CD8-positive, alpha-beta T cell (primary cell): ENCODE measurements at regions of chr7 and their contacts with region 1.

Region 1: DNA sequence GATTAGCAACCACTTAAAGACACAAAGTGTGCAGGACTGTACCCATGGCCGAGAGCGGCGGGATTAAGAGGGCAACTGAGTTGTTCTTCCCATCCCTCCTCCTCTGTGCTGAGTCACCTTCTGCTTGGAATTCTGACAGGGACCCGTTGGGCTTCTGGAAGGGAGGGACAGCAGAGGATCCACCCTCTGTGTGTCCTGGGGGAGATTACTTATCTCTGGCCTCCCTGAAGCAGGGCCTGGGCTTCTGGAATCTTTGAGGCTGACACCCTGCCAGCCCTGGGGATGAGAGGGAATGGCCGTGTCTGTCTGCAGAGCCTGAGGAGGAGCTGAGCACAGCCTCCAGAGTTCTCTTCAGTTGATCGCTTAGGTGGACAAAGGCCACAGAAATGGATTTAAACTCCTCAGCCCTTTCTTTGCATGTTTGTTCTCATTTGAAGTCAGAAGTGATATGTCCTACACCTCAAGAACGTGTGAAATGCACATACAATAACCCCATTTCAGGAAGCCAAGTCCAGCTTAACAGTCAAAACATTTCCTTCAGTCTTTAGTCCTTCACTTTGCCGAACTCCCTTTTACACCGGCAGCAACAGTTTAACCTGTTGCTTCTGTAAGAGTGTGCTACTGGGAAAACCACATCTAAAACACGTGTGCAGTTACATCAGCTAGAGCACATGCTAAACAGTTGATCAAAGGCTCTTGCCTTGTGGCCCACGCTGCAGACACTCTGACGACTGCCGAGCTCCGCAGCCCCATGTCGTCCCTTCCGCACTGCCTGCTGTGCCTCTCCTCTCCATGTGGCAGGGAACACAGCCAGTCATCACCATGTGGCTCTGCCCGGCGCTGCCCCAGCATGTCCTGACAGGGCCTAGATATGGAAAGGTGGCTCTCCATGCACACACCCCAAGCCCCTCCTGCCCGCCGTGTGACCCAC is 55.7 kb downstream of the IKZF1 start:
- DNase-seq: peak; percentile 62 to 96 (median 82)
- ATAC-seq: peak; percentile 83
- H3K4me3 ChIP-seq: peak overlapping the region in 1 of 2 experiments; percentile 17
- H3K4me3 Mint-ChIP-seq: peak overlapping the region; percentile 76
- H3K27ac ChIP-seq: peak overlapping the region; percentile 78 to 91
- H3K27ac Mint-ChIP-seq: peak overlapping the region; percentile 99
- H3K4me1 ChIP-seq: peaks cover 97% of the 10 kb centered on the region
- H3K4me1 Mint-ChIP-seq: peaks cover 98% of the 10 kb centered on the region
- H3K27me3 ChIP-seq: no peaks in the 10 kb centered on the region
- H3K27me3 Mint-ChIP-seq: no peaks in the 10 kb centered on the region
- CTCF ChIP-seq: no peak

Region 2: DNA sequence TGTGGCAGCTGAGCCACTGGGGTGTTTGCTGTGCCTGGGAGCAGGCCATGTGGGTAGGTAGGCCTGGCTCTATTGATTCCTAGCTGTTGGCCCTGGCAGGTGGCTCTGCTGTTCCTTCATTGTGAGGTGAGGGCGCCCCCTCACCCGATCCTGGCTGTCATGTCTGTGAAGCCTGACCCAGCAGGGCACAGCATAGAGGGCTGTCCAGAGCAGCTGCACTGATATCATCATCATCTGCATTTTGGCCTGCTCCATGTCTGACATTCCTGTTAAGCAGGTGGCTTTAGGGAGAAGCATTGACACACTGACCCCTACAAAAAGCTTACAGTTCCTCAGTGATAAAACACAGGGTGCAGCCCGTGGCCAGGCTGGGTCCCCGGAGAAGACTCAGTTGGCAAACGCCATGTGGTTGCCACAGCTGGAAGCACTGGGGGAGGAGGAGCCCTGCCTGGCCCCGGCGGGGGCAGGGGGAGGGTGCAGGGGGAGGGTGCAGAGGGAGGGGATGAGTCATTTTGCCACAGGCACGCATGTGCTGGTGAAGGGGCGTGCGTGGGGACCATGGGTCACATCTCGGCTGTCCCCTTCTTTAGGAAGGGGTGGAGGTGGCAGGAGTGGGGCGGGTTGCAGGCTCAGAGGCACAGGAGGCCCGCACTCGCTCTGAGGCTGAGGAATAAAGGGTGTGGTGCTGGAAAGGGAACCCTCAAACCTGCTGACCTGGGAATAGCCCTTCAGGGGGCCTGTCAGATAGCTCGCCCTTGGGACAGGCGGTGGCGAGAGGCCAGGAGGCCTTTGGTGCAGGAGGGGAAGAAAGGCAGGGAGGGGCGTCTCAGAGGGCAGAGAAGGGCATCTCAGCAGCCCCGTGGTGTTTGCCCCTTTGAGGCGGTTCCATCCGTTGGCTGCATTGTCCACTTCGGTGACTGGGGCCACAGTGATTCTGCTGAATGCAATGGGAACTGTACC is 24.2 kb before region 1 on chr7:
- CTCF ChIA-PET with region 1: interaction called, 18 read pairs
- POLR2A ChIA-PET with region 1: interaction called, 90 read pairs
- intact Hi-C with region 1: loop called in 1 of 2 experiments (anchors 1 kb)
- DNase-seq: peak; percentile 55 to 91 (median 84)
- ATAC-seq: peak; percentile 55
- H3K4me3 ChIP-seq: peak overlapping the region; percentile 10 to 19
- H3K4me3 Mint-ChIP-seq: peak overlapping the region; percentile 77
- H3K27ac ChIP-seq: peak overlapping the region; percentile 40 to 90
- H3K27ac Mint-ChIP-seq: no peak overlapping the region
- H3K4me1 ChIP-seq: peaks cover 99% of the 10 kb centered on the region
- H3K4me1 Mint-ChIP-seq: peaks cover 35% of the 10 kb centered on the region
- H3K27me3 ChIP-seq: no peaks in the 10 kb centered on the region
- H3K27me3 Mint-ChIP-seq: no peaks in the 10 kb centered on the region
- CTCF ChIP-seq: no peak

Region 3: GRCh38 chr7:50342616-50343114 is 17.6 kb before region 1 on chr7:
- CTCF ChIA-PET with region 1: interaction called, 146 read pairs
- POLR2A ChIA-PET with region 1: interaction called, 115 read pairs
- intact Hi-C with region 1: loop called in 1 of 2 experiments (anchors 1 kb)
- DNase-seq: peak in 5 of 9 experiments; percentile 65 to 91 (median 79)
- ATAC-seq: peak; percentile 48
- H3K4me3 ChIP-seq: peak overlapping the region in 1 of 2 experiments; percentile 25
- H3K4me3 Mint-ChIP-seq: peak overlapping the region; percentile 72
- H3K27ac ChIP-seq: peak overlapping the region; percentile 55 to 90
- H3K27ac Mint-ChIP-seq: no peak overlapping the region
- H3K4me1 ChIP-seq: peaks cover 99% of the 10 kb centered on the region
- H3K4me1 Mint-ChIP-seq: peaks cover 78% of the 10 kb centered on the region
- H3K27me3 ChIP-seq: no peaks in the 10 kb centered on the region
- H3K27me3 Mint-ChIP-seq: no peaks in the 10 kb centered on the region
- CTCF ChIP-seq: no peak

Region 4: DNA sequence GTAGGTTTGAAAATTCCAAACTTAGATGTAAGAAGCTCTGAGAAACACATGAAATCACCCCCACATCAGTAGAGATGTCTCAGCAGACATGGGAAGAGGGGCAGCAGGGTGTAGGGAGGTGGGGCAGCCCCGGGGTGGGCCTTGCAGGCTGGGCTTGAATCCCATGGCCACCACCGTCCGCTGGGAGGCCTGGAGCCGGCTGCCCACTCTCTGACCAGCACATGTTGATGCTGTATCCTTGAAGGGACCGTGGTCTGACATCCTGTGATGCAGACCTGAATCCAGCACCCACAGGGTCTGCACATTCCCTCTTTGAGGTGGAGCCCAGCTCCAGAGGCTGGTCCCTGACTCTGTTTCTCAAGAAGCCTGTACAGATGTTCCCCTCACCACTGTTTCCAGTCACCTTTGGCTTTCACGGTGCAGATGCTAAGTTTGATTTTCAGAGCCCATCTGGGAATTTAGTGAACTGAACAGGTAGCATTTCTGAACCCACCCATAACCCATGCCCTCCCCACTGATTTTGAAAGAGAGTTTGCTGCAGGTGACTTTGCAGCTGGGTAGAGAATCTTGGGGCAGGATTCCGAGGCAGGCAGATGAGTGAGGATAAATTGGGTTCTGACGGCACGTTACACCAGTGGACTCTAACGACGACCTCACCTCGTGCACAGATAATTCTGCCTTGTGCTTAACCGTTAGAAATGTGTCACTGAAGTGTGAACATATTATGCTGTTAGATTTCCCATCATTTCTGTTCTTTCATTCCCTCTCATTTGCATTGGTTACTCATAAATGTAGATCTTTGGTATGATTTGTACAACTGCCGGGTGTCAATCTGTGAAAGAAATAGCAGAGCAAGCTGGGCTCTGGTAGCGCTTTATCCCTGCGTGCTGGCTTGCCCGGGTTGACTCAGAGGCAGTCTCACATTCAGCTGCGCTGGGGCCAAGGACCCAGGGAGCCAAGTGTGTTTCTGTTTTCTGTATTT is 10.0 kb before region 1 on chr7:
- CTCF ChIA-PET with region 1: interaction called, 146 read pairs
- POLR2A ChIA-PET with region 1: interaction called, 115 read pairs
- intact Hi-C with region 1: loop called in 1 of 2 experiments (anchors 1 kb)
- DNase-seq: peak in 8 of 9 experiments; percentile 58 to 82 (median 75)
- ATAC-seq: peak; percentile 63
- H3K4me3 ChIP-seq: peak overlapping the region; percentile 4 to 23
- H3K4me3 Mint-ChIP-seq: peak overlapping the region; percentile 56
- H3K27ac ChIP-seq: peak overlapping the region; percentile 67 to 90
- H3K27ac Mint-ChIP-seq: peak overlapping the region; percentile 96
- H3K4me1 ChIP-seq: peaks cover 100% of the 10 kb centered on the region
- H3K4me1 Mint-ChIP-seq: peaks cover 98% of the 10 kb centered on the region
- H3K27me3 ChIP-seq: no peaks in the 10 kb centered on the region
- H3K27me3 Mint-ChIP-seq: no peaks in the 10 kb centered on the region
- CTCF ChIP-seq: no peak